A673 (cell line): ENCODE measurements at regions of chr3 and their contacts with region 1.

Region 1: DNA sequence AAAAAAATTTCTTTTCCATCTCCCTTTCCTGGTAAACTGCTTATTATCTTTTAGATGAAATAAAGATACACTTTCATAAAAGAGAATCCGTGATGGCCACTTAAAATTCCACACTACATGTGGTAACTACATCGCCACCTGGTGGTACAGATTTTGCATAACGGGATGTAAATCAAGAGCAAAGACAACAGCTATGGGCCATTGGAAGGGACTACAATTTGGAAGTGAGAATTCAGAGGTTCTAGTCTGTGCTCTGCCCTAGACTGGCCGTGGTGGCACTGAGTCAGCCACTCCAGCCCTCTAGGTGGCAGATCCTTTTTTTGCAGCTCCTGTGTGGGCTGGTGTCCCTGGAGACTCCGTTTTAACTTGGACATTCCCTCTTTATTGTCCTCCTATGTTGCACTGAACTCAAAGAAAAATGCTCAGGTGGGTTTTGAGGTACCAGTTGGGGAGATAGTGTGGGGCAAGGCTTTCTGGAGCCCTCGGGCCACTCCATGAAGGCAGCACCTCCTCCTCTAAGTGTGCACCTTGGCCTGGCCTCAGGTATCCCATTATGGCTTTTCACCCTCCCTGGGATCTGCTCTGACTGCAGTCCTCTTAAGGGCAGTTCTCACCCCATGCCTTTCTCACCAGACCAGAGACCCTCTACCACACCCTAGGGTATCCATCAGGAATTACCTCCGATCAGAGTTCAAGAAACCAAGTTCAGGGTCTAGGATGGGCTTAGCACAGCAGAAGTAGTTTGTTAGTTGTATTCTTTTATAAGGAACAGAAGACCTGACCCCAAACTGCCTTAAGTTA is 54.9 kb downstream of the SPSB4 start:
- DNase-seq: peak; percentile 84
- H3K4me3 ChIP-seq: no peak overlapping the region
- H3K27ac ChIP-seq: no peak overlapping the region
- H3K4me1 ChIP-seq: no peaks in the 10 kb centered on the region
- H3K27me3 ChIP-seq: no peaks in the 10 kb centered on the region
- CTCF ChIP-seq: peak; percentile 81

Region 2: DNA sequence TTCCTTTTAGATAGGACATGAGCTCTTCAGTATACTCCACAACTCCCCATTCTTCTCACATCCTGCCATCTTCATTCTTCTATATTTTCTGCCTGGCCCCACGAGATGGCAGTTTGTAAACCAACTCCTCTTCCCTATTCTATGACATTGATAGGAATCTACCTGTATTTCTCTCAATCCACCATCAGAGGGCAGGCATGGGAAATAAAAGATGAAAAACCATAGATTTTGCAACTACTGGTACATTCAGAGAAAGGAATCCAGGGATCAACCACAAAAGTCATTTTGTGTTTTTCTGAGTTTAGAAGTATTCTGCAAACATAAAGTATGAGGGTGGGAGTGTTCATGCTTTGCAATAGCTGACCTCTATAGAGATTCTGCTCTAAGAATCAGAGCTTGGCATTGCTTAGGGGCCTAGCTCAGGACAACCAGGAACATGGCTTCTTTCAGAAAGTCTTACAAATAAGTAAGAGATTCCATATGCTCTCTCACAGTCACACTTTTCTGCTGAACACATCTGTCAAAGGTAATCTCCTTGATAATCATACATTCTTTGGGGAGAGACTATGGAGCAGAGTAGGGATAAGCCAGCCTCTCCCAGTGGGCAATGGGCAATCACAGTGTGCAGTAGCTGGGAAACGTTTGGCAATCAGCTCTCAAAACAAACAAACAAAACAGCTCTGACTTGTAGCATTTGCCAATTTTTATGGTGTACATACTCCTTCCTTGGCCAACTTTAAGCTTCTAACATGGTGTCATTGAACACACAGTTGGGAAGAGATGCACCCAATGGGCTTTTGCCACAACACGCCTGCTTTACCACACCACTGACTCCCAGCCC is 207.5 kb before region 1 on chr3:
- CTCF ChIA-PET with region 1: no interaction called
- POLR2A ChIA-PET with region 1: no interaction called
- intact Hi-C with region 1: loop called (anchors 5 kb)
- DNase-seq: peak; percentile 76
- H3K4me3 ChIP-seq: no peak overlapping the region
- H3K27ac ChIP-seq: no peak overlapping the region
- H3K4me1 ChIP-seq: no peaks in the 10 kb centered on the region
- H3K27me3 ChIP-seq: peaks cover 19% of the 10 kb centered on the region
- CTCF ChIP-seq: peak; percentile 68

Region 3: DNA sequence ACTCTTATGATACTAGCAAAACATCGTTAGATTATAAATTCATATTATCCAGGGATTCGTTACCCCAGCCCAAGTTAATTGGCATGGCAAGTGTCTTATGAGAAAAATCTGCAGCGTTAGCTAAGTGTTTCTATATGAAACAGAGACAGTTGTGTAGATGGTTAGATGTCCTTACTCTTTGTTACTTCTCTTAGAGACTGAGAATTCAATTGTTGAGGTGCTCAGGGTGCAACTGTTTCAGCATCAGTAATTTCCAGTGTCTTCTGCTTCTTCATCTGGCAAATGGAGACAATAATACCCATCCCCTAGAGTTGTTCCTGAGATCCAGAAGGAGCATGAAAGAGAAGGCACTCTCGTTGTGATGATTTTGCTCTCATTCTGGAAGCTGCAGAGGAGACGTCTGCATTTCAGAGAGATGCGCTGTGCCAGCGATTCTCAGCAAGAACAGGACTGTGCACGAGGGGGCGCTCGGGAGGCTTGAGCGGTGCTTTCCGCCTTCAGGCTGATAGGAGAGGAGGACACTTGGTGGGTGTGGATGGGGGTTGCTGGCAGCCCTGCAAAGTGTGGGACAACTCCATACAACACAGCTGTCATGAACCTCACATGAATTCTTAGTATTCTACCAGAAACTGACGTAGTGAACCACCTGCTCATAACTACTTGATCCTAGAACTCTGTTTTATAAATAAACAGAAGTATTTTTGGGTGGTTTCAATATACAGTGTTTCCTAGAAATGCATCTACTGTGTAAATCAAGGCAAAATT is 94.6 kb before region 1 on chr3:
- CTCF ChIA-PET with region 1: interaction called, 5 read pairs
- POLR2A ChIA-PET with region 1: no interaction called
- intact Hi-C with region 1: loop called (anchors 2 kb)
- DNase-seq: peak; percentile 80
- H3K4me3 ChIP-seq: no peak overlapping the region
- H3K27ac ChIP-seq: no peak overlapping the region
- H3K4me1 ChIP-seq: peaks cover 6% of the 10 kb centered on the region
- H3K27me3 ChIP-seq: no peaks in the 10 kb centered on the region
- CTCF ChIP-seq: peak; percentile 91

Region 4: DNA sequence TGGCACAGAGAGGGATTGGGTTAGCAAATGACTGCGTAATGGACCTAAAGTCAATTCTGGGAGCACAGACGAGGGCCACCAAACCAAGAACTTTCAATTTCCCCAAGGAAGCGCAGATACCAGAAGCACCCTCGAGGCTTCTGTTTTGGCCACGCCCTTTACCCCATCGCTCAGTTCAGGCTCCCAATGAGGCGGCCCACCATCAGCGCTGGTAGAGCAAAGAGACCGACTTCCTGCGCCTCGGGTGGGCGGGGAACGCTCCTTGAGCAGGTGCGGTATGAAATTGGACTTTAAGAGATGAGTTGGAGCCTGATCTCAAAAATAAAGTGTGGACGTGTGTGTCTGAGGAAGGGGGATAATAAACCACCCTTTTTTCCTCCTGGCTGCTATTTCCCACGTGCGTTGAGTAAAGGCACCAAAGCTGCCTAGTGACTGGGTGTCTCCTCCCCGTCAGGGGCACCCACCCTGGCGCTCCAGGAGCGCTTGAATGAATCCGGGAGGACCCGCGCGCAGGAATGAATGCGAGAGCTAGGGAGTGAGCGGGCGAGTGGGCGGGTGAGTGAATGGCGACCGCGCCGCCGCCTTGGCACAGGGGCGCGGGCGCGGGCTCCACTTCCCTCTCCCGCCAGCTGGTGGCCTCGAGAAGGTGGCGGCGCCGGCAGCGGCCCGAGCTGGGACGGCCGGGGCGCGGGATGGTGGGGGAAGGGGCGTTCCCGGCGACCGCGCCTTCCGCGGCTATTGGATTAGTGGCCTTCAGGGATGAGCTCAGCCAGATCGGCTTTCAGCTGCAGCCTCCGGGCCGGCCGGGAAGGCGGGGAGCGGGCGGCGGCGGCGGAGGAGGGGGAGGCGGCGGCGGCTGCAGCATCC is 55.2 kb before region 1 on chr3 and contains the start of gene SPSB4:
- CTCF ChIA-PET with region 1: no interaction called
- POLR2A ChIA-PET with region 1: no interaction called
- intact Hi-C with region 1: loop called (anchors 1 kb)
- DNase-seq: peak; percentile 79
- H3K4me3 ChIP-seq: peak within 1 kb of the TSS; percentile 45
- H3K27ac ChIP-seq: no peak within 1 kb of the TSS
- H3K4me1 ChIP-seq: peaks cover 11% of the 10 kb centered on the region
- H3K27me3 ChIP-seq: peaks cover 72% of the 10 kb centered on the region
- CTCF ChIP-seq: peak; percentile 40
- total RNA-seq, gene SPSB4: 0.39 and 0.66 TPM in 2 replicates

Region 5: DNA sequence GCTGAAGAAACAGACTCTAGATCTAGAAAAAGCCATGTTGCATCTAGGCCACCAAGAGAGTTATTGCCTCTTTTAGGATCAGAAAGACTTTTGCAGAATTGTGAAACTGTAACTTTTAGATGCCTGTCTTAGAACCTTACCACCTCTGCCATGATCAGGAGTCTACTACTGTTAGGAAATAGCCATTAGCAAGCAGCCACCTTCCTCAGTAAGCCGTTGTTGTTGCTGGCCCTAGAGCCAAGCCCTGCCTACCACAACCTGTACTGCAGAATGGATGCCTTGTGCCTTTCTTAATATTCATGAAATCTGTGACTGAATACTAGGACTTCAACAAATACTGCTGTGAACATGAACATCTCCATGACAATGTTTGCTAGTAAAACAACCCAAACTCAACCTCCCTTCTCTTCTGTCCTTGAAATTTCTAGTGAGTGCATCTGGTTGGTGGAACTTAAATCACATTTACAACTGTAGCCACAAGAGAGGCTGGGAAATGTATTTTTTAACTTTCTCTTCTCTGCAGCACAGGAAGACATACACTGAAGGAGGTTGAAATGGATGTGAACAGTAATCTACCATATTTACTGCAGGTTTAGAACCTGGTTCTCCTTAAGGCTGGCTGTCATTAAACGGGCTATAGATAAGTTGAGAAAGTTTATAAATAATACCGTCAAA is 401.5 kb after region 1 on chr3:
- CTCF ChIA-PET with region 1: no interaction called
- POLR2A ChIA-PET with region 1: no interaction called
- intact Hi-C with region 1: no loop called
- DNase-seq: no peak
- H3K4me3 ChIP-seq: no peak overlapping the region
- H3K27ac ChIP-seq: no peak overlapping the region
- H3K4me1 ChIP-seq: no peaks in the 10 kb centered on the region
- H3K27me3 ChIP-seq: no peaks in the 10 kb centered on the region
- CTCF ChIP-seq: no peak

Region 6: GRCh38 chr3:141812084-141812483 is 706.1 kb after region 1 on chr3:
- CTCF ChIA-PET with region 1: no interaction called
- POLR2A ChIA-PET with region 1: no interaction called
- intact Hi-C with region 1: no loop called
- DNase-seq: peak; percentile 81
- H3K4me3 ChIP-seq: no peak overlapping the region
- H3K27ac ChIP-seq: no peak overlapping the region
- H3K4me1 ChIP-seq: peaks cover 13% of the 10 kb centered on the region
- H3K27me3 ChIP-seq: peaks cover 3% of the 10 kb centered on the region
- CTCF ChIP-seq: no peak